Heart left ventricle (tissue), 16 donors: ENCODE measurements at regions of chr2 and their contacts with region 1.

Region 1: GRCh38 chr2:62007555-62007954 is 102.1 kb downstream of the COMMD1 start:
- DNase-seq: no peak
- ATAC-seq: no peak
- H3K4me3 ChIP-seq: no peak overlapping the region
- H3K27ac ChIP-seq: peak overlapping the region in 3 of 12 donors; percentile 34 to 56 (median 36)
- H3K4me1 ChIP-seq: peaks cover 0 to 26% (median 2%) of the 10 kb centered on the region in 12 donors
- H3K27me3 ChIP-seq: no peaks in the 10 kb centered on the region
- CTCF ChIP-seq: no peak
- POLR2A ChIP-seq: no peak

Region 2: DNA sequence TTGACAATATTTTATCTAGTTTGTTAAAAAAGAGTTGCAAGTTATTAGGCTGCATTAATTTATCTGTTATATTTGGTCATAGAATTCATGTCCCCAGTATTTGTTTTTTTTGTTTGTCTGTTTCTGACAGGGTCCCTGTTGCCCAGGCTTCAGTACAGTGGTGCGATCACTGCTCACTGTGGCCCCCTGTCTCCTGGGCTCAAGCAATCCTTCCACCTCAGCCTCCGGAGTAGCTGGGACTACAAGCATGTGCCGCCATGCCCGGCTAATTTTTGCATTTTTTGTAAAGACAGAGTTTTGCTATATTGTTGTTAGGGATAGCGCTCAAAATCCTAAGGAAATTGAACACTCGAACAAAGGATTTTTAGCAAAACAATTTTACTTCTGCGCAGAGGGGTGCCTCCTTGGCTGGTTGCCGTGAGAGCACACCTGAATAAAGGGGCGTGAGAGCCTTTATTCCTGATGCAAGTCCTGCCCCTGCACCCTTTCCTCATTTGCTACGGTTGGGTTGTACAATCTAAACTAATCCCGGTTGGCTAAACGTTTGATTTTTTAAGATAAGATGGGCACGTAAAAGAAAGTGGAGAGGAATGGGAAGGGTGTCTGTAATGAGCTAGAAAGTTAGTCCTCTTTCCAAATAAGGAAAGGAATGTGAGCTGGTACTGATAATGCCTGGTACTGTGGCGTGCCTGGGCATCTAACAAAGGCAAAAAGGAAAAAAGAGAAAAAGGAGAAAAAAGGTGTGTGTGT is 36.6 kb before region 1 on chr2:
- intact Hi-C with region 1: loop called in 1 of 10 experiments (anchors 5 kb)
- DNase-seq: no peak
- ATAC-seq: peak in 3 of 4 donors; percentile 61 to 81 (median 65)
- H3K4me3 ChIP-seq: peak overlapping the region in 7 of 12 donors; percentile 3 to 33 (median 15)
- H3K27ac ChIP-seq: peak overlapping the region in 7 of 12 donors; percentile 23 to 71 (median 57)
- H3K4me1 ChIP-seq: peaks cover 0 to 12% (median 9%) of the 10 kb centered on the region in 12 donors
- H3K27me3 ChIP-seq: no peaks in the 10 kb centered on the region
- CTCF ChIP-seq: peak in 2 of 12 donors; percentile 16 to 34
- POLR2A ChIP-seq: no peak

Region 3: GRCh38 chr2:62029912-62030311 is 22.4 kb after region 1 on chr2:
- intact Hi-C with region 1: no loop called
- DNase-seq: no peak
- ATAC-seq: no peak
- H3K4me3 ChIP-seq: no peak overlapping the region
- H3K27ac ChIP-seq: no peak overlapping the region
- H3K4me1 ChIP-seq: peaks cover 0 to 11% (median 0%) of the 10 kb centered on the region in 12 donors
- H3K27me3 ChIP-seq: no peaks in the 10 kb centered on the region
- CTCF ChIP-seq: no peak
- POLR2A ChIP-seq: no peak